Activated CD4-positive, alpha-beta T cell treated with anti-CD3 and anti-CD28 coated beads, Interleukin-2, amount 10 ng/mL, durations not matched to agents 24 days and 14 days (primary cell): ENCODE measurements at regions of chr3 and their contacts with region 1.

Region 1: DNA sequence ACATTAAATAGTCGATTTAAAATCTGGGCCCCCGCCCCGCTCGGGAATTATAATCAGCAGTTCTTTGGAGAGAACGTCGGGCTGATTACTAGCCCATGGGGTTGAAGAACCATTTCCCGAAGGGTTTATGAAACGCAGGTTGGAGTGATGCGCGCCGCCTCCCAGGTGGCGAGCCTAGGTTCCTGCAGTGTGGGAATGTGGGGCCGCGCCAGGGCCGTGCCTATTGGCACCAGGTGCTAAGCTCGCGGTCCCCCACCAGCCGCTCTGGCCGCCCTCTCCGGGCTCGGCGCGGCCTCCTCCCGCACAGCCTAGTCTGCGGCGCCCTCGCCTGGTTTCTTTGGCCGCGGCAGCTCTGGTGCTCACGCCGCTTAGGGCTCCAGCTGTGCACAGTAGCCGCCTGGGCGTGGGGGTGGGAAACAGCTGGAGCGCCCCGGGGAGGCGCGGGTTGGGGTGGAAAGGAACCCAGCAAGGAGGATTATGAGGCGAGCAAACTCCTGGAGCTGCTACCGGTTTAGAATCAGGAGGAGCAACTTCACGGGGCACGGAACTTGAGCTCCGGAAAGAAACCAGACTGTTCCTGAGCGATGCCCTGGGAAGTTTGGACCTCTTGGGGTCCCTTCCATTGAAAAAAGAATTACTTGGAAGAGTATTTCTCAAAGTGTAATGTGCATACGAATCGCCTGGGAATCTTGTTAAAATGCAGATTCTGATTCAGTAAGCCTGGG is 5.6 kb upstream of the MECOM start:
- DNase-seq: peak; percentile 84
- H3K4me3 Mint-ChIP-seq: peak overlapping the region; percentile 61
- H3K27ac Mint-ChIP-seq: peak overlapping the region; percentile 27
- H3K4me1 Mint-ChIP-seq: peaks cover 16% of the 10 kb centered on the region
- H3K27me3 Mint-ChIP-seq: peaks cover 88% of the 10 kb centered on the region

Region 2: DNA sequence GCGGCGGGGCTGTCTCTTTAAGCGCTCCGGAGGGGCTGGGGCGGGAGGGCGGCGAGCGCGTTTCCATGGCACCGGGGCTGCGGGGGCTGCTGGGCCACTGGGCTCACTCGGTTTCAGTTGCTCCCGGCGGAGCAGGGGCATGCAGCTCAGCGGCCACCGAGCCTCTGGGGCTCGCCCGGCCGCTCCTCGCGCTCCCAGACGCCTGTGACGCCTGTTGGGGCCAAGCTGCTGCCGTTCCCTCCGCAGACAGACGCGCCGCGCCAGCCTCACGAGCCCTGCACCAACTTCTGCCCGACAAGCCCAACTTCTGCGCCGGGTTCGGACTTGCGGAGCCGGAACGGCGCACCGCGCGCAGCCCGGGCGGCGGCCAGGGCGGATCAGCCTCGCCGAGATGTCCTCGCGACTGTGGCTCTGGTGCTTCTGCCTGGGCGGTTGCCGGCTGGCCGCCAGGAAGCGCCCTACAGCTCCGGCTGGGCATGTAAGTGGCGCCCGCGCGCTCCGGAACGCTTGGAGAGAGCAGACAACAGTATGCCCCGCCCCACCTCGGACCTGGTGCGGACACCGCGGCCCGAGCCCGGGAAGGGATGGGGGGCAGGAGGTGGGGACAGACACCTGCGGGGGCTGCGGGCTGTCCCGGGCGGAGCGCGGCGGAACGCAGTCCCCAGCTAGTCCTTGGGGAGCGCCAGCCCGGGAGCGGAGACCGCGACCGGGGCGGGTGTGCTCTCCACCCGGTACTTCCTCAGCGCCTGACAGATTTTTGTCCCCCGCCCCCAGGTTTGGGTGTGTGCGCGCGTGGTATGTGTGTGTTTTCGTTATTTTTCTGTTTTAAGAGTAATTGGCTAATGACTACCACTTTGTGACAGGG is 1419.3 kb before region 1 on chr3:
- intact Hi-C with region 1: loop called (anchors 10 kb)
- DNase-seq: peak; percentile 76
- H3K4me3 Mint-ChIP-seq: peak overlapping the region; percentile 79
- H3K27ac Mint-ChIP-seq: no peak overlapping the region
- H3K4me1 Mint-ChIP-seq: peaks cover 10% of the 10 kb centered on the region
- H3K27me3 Mint-ChIP-seq: peaks cover 50% of the 10 kb centered on the region

Region 3: GRCh38 chr3:169149349-169149890 is 519.7 kb before region 1 on chr3:
- intact Hi-C with region 1: loop called (anchors 1 kb)
- DNase-seq: peak; percentile 92
- H3K4me3 Mint-ChIP-seq: peak overlapping the region; percentile 67
- H3K27ac Mint-ChIP-seq: no peak overlapping the region
- H3K4me1 Mint-ChIP-seq: peaks cover 18% of the 10 kb centered on the region
- H3K27me3 Mint-ChIP-seq: peaks cover 68% of the 10 kb centered on the region

Region 4: GRCh38 chr3:169430707-169431404 is 238.3 kb before region 1 on chr3:
- intact Hi-C with region 1: no loop called
- DNase-seq: peak; percentile 57
- H3K4me3 Mint-ChIP-seq: no peak overlapping the region
- H3K27ac Mint-ChIP-seq: no peak overlapping the region
- H3K4me1 Mint-ChIP-seq: peaks cover 8% of the 10 kb centered on the region
- H3K27me3 Mint-ChIP-seq: peaks cover 2% of the 10 kb centered on the region

Region 5: GRCh38 chr3:169744366-169745054 is 75.4 kb after region 1 on chr3:
- intact Hi-C with region 1: no loop called
- DNase-seq: no peak
- H3K4me3 Mint-ChIP-seq: no peak overlapping the region
- H3K27ac Mint-ChIP-seq: no peak overlapping the region
- H3K4me1 Mint-ChIP-seq: peaks cover 7% of the 10 kb centered on the region
- H3K27me3 Mint-ChIP-seq: peaks cover 22% of the 10 kb centered on the region

Region 6: GRCh38 chr3:170584585-170585007 is 915.5 kb after region 1 on chr3:
- intact Hi-C with region 1: loop called (anchors 10 kb)
- DNase-seq: peak; percentile 86
- H3K4me3 Mint-ChIP-seq: no peak overlapping the region
- H3K27ac Mint-ChIP-seq: no peak overlapping the region
- H3K4me1 Mint-ChIP-seq: no peaks in the 10 kb centered on the region
- H3K27me3 Mint-ChIP-seq: peaks cover 48% of the 10 kb centered on the region